ENCODE measurements at regions of chr5 and their contacts with region 1.

Region 1: DNA sequence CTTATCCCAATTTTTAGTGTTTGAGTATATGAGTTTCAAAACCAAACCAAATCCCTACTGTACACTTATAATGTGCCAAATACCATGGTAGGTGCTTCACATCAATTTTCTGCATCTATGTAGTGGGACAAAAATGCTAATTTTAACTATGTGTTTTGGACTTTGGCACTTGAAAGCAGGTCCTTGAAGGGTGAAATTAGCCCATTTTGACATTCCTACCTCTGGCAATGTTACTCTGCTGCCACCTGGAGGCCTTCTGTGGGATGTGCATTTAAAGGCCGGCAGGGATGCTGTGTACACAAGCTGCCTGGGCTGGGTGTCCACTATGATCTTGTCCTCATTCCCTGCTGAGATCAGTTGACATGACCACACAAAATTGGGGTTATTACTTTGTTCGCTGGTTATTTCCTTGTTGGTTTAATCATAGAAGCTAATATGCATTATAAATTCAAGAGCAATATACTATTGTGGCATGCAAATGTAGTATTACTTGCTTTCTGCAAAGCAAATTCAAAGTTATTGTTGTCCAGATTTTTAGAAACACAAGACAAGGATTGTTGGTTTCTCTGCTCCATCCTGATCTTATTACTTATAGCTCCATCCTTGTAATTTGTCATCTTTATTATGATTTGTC is 166.8 kb downstream of the ARHGEF28 start:
- DNase-seq: peak; percentile 77
- ATAC-seq: peak; percentile 84
- H3K4me3 Mint-ChIP-seq: no peak overlapping the region
- H3K27ac Mint-ChIP-seq: no peak overlapping the region
- H3K4me1 Mint-ChIP-seq: no peaks in the 10 kb centered on the region
- H3K27me3 Mint-ChIP-seq: peaks cover 14% of the 10 kb centered on the region

Region 2: DNA sequence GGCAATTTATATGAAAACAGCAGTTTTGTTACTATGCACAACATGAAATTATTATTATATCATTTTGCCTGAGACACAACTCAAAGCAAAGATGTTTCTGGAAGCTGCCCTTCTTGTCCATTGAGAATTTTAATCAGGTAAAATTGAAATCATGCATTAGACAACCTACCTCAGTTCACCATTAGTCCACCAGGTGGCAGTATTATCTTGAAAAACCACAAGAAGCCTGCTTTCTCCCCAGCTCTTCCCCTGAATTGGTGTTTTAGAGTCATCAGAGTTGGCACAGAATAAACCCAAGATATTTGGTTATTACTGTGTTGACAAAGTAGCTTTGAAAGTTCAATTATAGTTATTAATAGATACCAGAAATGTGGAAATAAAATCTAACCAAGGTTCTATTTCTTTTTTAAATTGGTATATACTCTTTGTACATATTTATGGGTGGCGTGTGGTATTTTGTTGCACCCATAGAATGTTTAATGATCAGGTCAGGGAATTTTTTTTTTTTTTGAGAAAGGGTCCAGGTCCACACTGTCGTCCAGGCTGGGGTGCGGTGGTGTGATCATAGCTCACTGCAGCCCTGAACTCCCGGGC is 201.6 kb before region 1 on chr5:
- CTCF ChIA-PET with region 1: interaction called, 152 read pairs
- POLR2A ChIA-PET with region 1: no interaction called
- intact Hi-C with region 1: loop called (anchors 1 kb)
- DNase-seq: peak; percentile 44
- ATAC-seq: peak; percentile 63
- H3K4me3 Mint-ChIP-seq: no peak overlapping the region
- H3K27ac Mint-ChIP-seq: no peak overlapping the region
- H3K4me1 Mint-ChIP-seq: no peaks in the 10 kb centered on the region
- H3K27me3 Mint-ChIP-seq: no peaks in the 10 kb centered on the region

Region 3: GRCh38 chr5:73596705-73597328 is 196.0 kb before region 1 on chr5:
- CTCF ChIA-PET with region 1: interaction called, 152 read pairs
- POLR2A ChIA-PET with region 1: no interaction called
- intact Hi-C with region 1: no loop called
- DNase-seq: peak; percentile 16
- ATAC-seq: no peak
- H3K4me3 Mint-ChIP-seq: no peak overlapping the region
- H3K27ac Mint-ChIP-seq: no peak overlapping the region
- H3K4me1 Mint-ChIP-seq: no peaks in the 10 kb centered on the region
- H3K27me3 Mint-ChIP-seq: peaks cover 2% of the 10 kb centered on the region

Region 4: GRCh38 chr5:73722231-73722630 is 70.6 kb before region 1 on chr5:
- CTCF ChIA-PET with region 1: no interaction called
- POLR2A ChIA-PET with region 1: no interaction called
- intact Hi-C with region 1: no loop called
- DNase-seq: no peak
- ATAC-seq: no peak
- H3K4me3 Mint-ChIP-seq: no peak overlapping the region
- H3K27ac Mint-ChIP-seq: no peak overlapping the region
- H3K4me1 Mint-ChIP-seq: no peaks in the 10 kb centered on the region
- H3K27me3 Mint-ChIP-seq: peaks cover 2% of the 10 kb centered on the region